ENCODE measurements at regions of chr7 and their contacts with region 1.

Region 1: GRCh38 chr7:50206453-50207250 is 97.9 kb upstream of the IKZF1 start:
- DNase-seq: peak; percentile 44 to 87 (median 84)
- H3K4me3 ChIP-seq: no peak overlapping the region
- H3K27ac ChIP-seq: no peak overlapping the region
- H3K4me1 ChIP-seq: peaks cover 14 to 63% (median 45%) of the 10 kb centered on the region in 4 experiments
- H3K27me3 ChIP-seq: no peaks in the 10 kb centered on the region

Region 2: GRCh38 chr7:50142425-50143017 is 64.1 kb before region 1 on chr7:
- CTCF ChIA-PET with region 1: interaction called, 26 read pairs
- POLR2A ChIA-PET with region 1: no interaction called
- DNase-seq: peak; percentile 65 to 84 (median 76)
- H3K4me3 ChIP-seq: peak overlapping the region in 1 of 7 experiments; percentile 44
- H3K27ac ChIP-seq: no peak overlapping the region
- H3K4me1 ChIP-seq: peaks cover 2 to 22% (median 12%) of the 10 kb centered on the region in 4 experiments
- H3K27me3 ChIP-seq: no peaks in the 10 kb centered on the region

Region 3: DNA sequence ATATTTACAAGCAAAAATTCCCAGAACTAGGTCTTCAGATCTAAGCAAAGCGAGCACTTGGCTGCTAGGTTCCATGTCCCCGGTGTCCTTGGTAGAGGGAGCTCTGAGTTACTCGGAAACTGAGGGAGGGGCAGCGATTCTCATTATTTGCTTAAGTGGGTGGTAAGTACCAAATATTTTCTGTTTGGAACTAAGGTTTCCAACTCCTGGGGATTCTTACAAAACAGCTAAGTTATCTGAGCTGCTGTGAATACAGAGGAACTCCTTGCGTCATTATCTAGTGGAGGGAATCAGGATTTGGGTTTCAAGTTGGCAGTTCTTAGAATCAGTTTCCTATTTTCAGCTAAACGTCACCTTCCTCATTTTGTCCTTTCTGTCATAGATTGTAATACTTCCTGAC is 21.1 kb after region 1 on chr7:
- CTCF ChIA-PET with region 1: interaction called, 14 read pairs
- POLR2A ChIA-PET with region 1: no interaction called
- DNase-seq: peak; percentile 39 to 82 (median 68)
- H3K4me3 ChIP-seq: peak overlapping the region in 4 of 7 experiments; percentile 29 to 62 (median 46)
- H3K27ac ChIP-seq: peak overlapping the region; percentile 48 to 68
- H3K4me1 ChIP-seq: peaks cover 15 to 34% (median 25%) of the 10 kb centered on the region in 4 experiments
- H3K27me3 ChIP-seq: no peaks in the 10 kb centered on the region

Region 4: DNA sequence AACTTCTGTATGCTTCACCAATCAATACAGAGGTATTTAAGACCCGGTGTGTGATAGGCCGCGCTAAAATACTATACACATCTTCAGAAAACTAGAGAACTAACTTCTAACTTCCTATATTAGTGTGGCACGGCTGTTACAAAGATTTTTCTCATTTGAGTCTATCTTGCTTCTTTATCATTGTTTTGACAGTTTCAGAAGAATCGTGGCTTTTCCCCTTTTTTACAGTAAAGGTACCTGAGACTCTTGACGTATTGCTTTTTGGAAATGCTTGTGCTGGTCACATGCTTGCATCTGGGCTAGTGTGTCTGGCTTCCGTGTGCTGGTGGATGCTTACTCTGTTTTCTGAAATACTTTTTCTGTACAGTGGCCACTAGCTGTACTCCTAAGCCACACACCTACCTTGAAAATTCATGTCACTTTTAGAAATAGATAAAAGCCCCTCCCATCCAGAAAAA is 110.6 kb after region 1 on chr7:
- CTCF ChIA-PET with region 1: interaction called, 49 read pairs
- POLR2A ChIA-PET with region 1: no interaction called
- DNase-seq: peak in 1 of 3 donors; percentile 64
- H3K4me3 ChIP-seq: peak overlapping the region in 2 of 7 experiments; percentile 26 to 46
- H3K27ac ChIP-seq: peak overlapping the region; percentile 41 to 65
- H3K4me1 ChIP-seq: peaks cover 50 to 91% (median 76%) of the 10 kb centered on the region in 4 experiments
- H3K27me3 ChIP-seq: no peaks in the 10 kb centered on the region

Region 5: GRCh38 chr7:50359995-50360925 is 153.6 kb after region 1 on chr7:
- CTCF ChIA-PET with region 1: interaction called, 13 read pairs
- POLR2A ChIA-PET with region 1: no interaction called
- DNase-seq: no peak
- H3K4me3 ChIP-seq: no peak overlapping the region
- H3K27ac ChIP-seq: peak overlapping the region in 1 of 2 experiments; percentile 74
- H3K4me1 ChIP-seq: peaks cover 19 to 95% (median 83%) of the 10 kb centered on the region in 4 experiments
- H3K27me3 ChIP-seq: no peaks in the 10 kb centered on the region

Region 6: DNA sequence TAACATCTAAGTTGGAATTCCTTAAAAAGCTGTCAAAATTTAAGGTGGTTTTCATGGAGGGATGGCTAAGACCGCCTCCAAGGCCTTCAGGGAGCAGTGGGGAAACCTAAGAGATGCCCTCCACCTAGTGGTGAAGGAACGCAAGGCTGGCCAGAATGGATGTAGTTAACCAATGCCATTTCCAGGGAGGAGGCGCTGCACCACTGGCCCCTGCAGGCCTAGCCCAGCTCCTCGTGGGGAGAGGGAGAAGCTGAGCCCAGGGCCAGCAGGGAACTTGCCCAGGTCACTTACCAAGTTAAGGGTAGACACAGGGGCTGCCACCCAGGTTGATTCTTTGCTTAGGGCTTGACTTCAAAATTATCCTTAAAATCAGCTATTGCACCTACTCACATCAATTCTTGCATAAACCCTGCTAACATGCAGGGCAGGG is 211.4 kb after region 1 on chr7:
- CTCF ChIA-PET with region 1: interaction called, 63 read pairs
- POLR2A ChIA-PET with region 1: no interaction called
- DNase-seq: peak; percentile 79 to 84 (median 83)
- H3K4me3 ChIP-seq: no peak overlapping the region
- H3K27ac ChIP-seq: no peak overlapping the region
- H3K4me1 ChIP-seq: peaks cover 7 to 29% (median 15%) of the 10 kb centered on the region in 4 experiments
- H3K27me3 ChIP-seq: no peaks in the 10 kb centered on the region

Region 7: DNA sequence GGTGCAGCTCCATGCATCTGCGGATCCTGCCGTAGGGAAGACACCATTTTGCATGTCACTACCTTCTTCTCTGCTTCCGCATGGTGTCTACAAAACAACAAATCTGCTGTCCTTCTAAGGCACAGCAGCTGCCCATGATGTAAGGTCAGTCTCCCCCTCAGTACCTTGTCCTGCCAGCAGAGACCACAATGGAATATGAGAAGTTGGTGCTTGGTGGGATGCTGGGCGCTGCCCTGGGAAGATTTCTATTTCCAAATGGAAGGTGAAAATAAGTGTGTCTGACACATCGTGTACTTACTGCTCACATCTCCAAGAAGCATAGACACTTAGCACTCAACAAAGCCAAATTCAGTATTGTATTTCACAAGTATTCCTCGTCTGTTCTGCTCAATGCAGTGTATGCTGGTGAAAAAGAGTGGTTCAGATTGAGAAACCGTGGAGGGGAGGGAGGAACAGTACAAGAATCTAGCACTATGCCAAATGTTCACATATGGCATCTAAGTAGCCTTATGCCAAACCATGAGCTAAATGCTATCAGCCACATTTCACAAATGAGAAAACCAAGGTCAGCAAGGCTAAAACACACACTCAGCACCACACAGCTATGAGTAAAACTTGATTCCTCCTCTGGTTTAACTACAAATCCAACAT is 481.0 kb after region 1 on chr7:
- CTCF ChIA-PET with region 1: no interaction called
- POLR2A ChIA-PET with region 1: no interaction called
- DNase-seq: no peak
- H3K4me3 ChIP-seq: no peak overlapping the region
- H3K27ac ChIP-seq: no peak overlapping the region
- H3K4me1 ChIP-seq: peaks cover 3 to 29% (median 26%) of the 10 kb centered on the region in 4 experiments
- H3K27me3 ChIP-seq: no peaks in the 10 kb centered on the region